ENCODE measurements at regions of chr13 and their contacts with region 1.

Region 1: GRCh38 chr13:72097568-72097967 is 230.6 kb upstream of the DACH1 start:
- DNase-seq: no peak
- H3K4me3 ChIP-seq: no peak overlapping the region
- H3K27ac ChIP-seq: no peak overlapping the region
- H3K4me1 ChIP-seq: no peaks in the 10 kb centered on the region
- H3K27me3 ChIP-seq: no peaks in the 10 kb centered on the region
- CTCF ChIP-seq: no peak
- POLR2A ChIP-seq: no peak

Region 2: GRCh38 chr13:72062566-72062965 is 35.0 kb before region 1 on chr13:
- CTCF ChIA-PET with region 1: no interaction called
- POLR2A ChIA-PET with region 1: no interaction called
- dilution Hi-C with region 1: no loop called
- intact Hi-C with region 1: loop called (anchors 1 kb)
- DNase-seq: peak; percentile 15
- H3K4me3 ChIP-seq: no peak overlapping the region
- H3K27ac ChIP-seq: no peak overlapping the region
- H3K4me1 ChIP-seq: no peaks in the 10 kb centered on the region
- H3K27me3 ChIP-seq: no peaks in the 10 kb centered on the region
- CTCF ChIP-seq: no peak
- POLR2A ChIP-seq: no peak

Measured in endothelial cell of umbilical vein (primary cell).